ENCODE measurements at regions of chr15 and their contacts with region 1.

Region 1: GRCh38 chr15:52568601-52569256 is at the start of gene ARPP19:
- DNase-seq: peak; percentile 75
- H3K4me3 Mint-ChIP-seq: peak within 1 kb of the TSS; percentile 92
- H3K27ac Mint-ChIP-seq: peak within 1 kb of the TSS; percentile 99
- H3K4me1 Mint-ChIP-seq: peaks cover 43% of the 10 kb centered on the region
- H3K27me3 Mint-ChIP-seq: peaks cover 2% of the 10 kb centered on the region
- total RNA-seq, gene ARPP19: 195 and 216 TPM in 2 replicates

Region 2: DNA sequence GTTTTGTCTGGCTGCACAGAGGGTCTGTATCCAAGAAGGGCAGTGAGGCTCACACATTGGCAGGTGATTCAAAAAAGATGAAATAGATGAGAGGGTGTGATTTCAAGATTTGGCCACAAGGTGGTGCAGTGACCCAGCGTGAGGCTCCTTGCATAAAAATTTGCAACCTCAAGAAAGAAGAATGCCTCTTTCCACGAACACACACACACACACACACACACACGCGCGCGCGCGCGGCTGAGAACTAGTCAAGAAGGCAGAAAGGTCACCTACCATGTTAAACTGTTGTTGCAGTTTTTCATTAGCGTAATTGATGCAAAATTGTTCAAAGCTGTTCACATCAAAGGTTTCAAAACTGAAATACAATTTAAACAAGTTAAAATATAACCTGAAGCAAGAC is 312.4 kb before region 1 on chr15:
- intact Hi-C with region 1: loop called (anchors 2 kb)
- DNase-seq: peak; percentile 62
- H3K4me3 Mint-ChIP-seq: peak overlapping the region; percentile 47
- H3K27ac Mint-ChIP-seq: peak overlapping the region; percentile 82
- H3K4me1 Mint-ChIP-seq: peaks cover 28% of the 10 kb centered on the region
- H3K27me3 Mint-ChIP-seq: no peaks in the 10 kb centered on the region

Region 3: GRCh38 chr15:52427804-52428203 is 140.9 kb before region 1 on chr15:
- intact Hi-C with region 1: no loop called
- DNase-seq: no peak
- H3K4me3 Mint-ChIP-seq: no peak overlapping the region
- H3K27ac Mint-ChIP-seq: no peak overlapping the region
- H3K4me1 Mint-ChIP-seq: peaks cover 9% of the 10 kb centered on the region
- H3K27me3 Mint-ChIP-seq: no peaks in the 10 kb centered on the region

Region 4: GRCh38 chr15:52658955-52659354 is 90.2 kb after region 1 on chr15:
- intact Hi-C with region 1: loop called (anchors 5 kb)
- DNase-seq: peak; percentile 17
- H3K4me3 Mint-ChIP-seq: no peak overlapping the region
- H3K27ac Mint-ChIP-seq: peak overlapping the region; percentile 49
- H3K4me1 Mint-ChIP-seq: peaks cover 29% of the 10 kb centered on the region
- H3K27me3 Mint-ChIP-seq: no peaks in the 10 kb centered on the region

Region 5: DNA sequence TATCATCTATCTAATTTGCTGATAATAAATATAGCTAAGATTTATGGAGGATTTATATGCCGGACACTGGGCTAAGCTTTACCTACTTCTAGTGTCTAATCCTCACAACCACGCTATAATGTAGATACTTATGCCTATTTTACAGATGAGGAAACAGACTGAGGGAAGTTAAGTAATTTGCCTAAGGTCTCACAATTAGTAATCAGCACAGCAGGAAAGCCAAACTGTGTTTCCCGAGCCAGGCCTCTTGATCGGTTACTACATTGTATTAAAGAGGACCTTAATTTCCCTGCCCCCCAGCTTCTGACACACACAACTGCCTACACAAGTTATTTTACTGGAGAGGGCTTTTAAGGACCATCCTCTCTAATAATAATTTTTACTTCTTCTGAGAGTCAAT is 180.5 kb after region 1 on chr15:
- intact Hi-C with region 1: no loop called
- DNase-seq: no peak
- H3K4me3 Mint-ChIP-seq: no peak overlapping the region
- H3K27ac Mint-ChIP-seq: no peak overlapping the region
- H3K4me1 Mint-ChIP-seq: no peaks in the 10 kb centered on the region
- H3K27me3 Mint-ChIP-seq: peaks cover 29% of the 10 kb centered on the region

Region 6: GRCh38 chr15:53133255-53133850 is 564.6 kb after region 1 on chr15:
- intact Hi-C with region 1: no loop called
- DNase-seq: no peak
- H3K4me3 Mint-ChIP-seq: no peak overlapping the region
- H3K27ac Mint-ChIP-seq: no peak overlapping the region
- H3K4me1 Mint-ChIP-seq: no peaks in the 10 kb centered on the region
- H3K27me3 Mint-ChIP-seq: no peaks in the 10 kb centered on the region

Measured in activated T-helper 1 cell treated with anti-CD3 and anti-CD28 coated beads, Interleukin-12 subunit alpha, Interleukin-12 subunit beta, Interleukin-2, Interleukin-4 antibody, amounts not matched to agents 30 ng/mL and 10 ng/mL and 1 ng/mL, durations not matched to agents 14 hours and 24 hours and 36 hours (primary cell).